ENCODE measurements at regions of chr11 and their contacts with region 1.

Region 1: DNA sequence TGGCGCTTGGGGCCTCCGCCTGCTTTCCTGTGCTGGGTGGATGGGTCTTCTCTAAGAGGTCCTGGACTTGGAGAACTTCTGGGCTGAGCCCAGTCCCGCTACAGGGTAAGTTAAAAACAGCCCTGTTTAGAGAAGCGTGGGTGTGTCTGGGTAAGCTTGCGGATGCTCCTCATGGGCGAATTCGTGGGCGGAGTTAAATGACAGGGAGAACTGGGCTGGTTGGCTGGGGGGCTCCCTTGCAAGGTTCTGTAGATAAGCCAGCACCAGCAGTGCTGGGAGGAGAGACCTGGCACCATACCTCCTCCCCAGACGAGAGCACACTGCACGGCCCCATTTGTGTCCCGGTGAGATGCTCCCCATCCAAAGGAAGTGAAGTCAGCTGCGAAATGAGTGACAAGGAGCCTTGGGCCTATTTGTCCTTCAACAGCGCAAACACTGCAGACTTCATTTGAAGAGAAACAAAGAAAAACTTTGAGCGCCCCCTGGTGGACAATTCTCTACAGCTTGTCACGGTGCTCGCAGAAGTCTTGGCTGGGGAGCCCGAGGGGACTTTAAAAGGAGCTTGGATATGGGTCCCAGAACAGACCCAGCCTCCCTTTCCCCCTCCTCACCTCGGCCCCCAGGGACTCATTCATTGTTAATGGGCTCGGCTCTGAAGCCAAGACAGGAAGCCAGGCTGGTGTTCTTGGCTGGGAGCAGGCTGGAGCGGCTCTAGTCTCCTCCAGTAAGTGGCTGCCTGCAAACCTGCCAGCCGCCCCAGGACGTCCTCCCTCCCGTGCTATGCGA is 39.5 kb downstream of the TP53I11 start:
- DNase-seq: peak; percentile 66 to 83 (median 74)
- H3K4me3 ChIP-seq: no peak overlapping the region
- H3K4me3 Mint-ChIP-seq: no peak overlapping the region
- H3K27ac ChIP-seq: no peak overlapping the region
- H3K27ac Mint-ChIP-seq: no peak overlapping the region
- H3K4me1 ChIP-seq: no peaks in the 10 kb centered on the region
- H3K4me1 Mint-ChIP-seq: peaks cover 3 to 7% (median 6%) of the 10 kb centered on the region in 3 donors
- H3K27me3 ChIP-seq: no peaks in the 10 kb centered on the region
- H3K27me3 Mint-ChIP-seq: peaks cover 0 to 5% of the 10 kb centered on the region in 2 donors

Region 2: GRCh38 chr11:44621140-44621681 is 290.0 kb before region 1 on chr11:
- CTCF ChIA-PET with region 1: interaction called, 22 read pairs
- POLR2A ChIA-PET with region 1: no interaction called
- DNase-seq: peak; percentile 44 to 69 (median 50)
- H3K4me3 ChIP-seq: no peak overlapping the region
- H3K4me3 Mint-ChIP-seq: no peak overlapping the region
- H3K27ac ChIP-seq: no peak overlapping the region
- H3K27ac Mint-ChIP-seq: no peak overlapping the region
- H3K4me1 ChIP-seq: peaks cover 6% of the 10 kb centered on the region
- H3K4me1 Mint-ChIP-seq: peaks cover 17 to 27% (median 18%) of the 10 kb centered on the region in 3 donors
- H3K27me3 ChIP-seq: no peaks in the 10 kb centered on the region
- H3K27me3 Mint-ChIP-seq: peaks cover 0 to 2% of the 10 kb centered on the region in 2 donors

Region 3: GRCh38 chr11:44775366-44775984 is 135.7 kb before region 1 on chr11:
- CTCF ChIA-PET with region 1: interaction called, 10 read pairs
- POLR2A ChIA-PET with region 1: no interaction called
- DNase-seq: peak; percentile 34 to 66 (median 40)
- H3K4me3 ChIP-seq: no peak overlapping the region
- H3K4me3 Mint-ChIP-seq: no peak overlapping the region
- H3K27ac ChIP-seq: no peak overlapping the region
- H3K27ac Mint-ChIP-seq: peak overlapping the region in 1 of 8 donors; percentile 2
- H3K4me1 ChIP-seq: no peaks in the 10 kb centered on the region
- H3K4me1 Mint-ChIP-seq: peaks cover 0 to 7% (median 7%) of the 10 kb centered on the region in 3 donors
- H3K27me3 ChIP-seq: no peaks in the 10 kb centered on the region
- H3K27me3 Mint-ChIP-seq: peaks cover 0 to 2% of the 10 kb centered on the region in 2 donors

Region 4: DNA sequence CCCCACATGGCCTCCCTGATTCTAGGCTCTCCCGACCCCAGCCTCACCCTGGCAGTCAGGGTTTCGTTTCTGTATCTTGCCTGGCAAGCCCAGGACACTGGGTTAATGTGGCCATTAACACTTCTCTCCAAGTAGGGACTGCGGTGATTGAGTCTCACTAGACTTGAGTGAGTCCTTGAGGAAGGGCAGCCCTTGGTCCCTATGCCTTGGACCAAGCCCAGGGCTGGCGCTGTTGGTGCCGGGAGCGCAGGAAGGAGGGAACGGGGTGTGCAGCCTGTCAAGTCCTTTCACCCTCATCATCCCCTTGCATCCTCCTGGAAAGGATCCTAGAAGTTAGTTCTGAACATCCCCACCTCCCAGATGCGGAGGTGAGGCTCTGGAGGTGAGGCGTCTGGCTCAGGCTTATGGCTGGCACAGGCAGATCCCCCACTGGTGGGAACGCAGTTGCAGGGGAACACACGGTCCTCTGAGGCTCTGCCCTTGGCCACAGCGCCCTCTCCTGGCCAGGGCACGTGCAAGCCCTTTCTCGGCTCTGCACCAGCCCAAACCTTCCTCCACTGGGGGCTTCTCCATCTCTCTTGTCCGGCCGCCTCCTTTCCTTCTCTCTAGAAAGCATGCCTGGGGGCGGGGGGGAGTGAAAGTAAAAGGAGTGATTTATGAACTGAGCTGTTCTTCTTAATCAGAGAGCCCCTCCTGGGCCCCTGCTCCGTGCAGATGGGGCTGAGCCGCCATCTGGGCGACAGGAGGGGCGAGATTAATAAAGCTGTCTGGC is 17.2 kb before region 1 on chr11:
- CTCF ChIA-PET with region 1: interaction called, 10 read pairs
- POLR2A ChIA-PET with region 1: no interaction called
- DNase-seq: peak; percentile 24 to 74 (median 52)
- H3K4me3 ChIP-seq: no peak overlapping the region
- H3K4me3 Mint-ChIP-seq: no peak overlapping the region
- H3K27ac ChIP-seq: no peak overlapping the region
- H3K27ac Mint-ChIP-seq: peak overlapping the region in 2 of 8 donors; percentile 12 to 47
- H3K4me1 ChIP-seq: no peaks in the 10 kb centered on the region
- H3K4me1 Mint-ChIP-seq: no peaks in the 10 kb centered on the region
- H3K27me3 ChIP-seq: no peaks in the 10 kb centered on the region
- H3K27me3 Mint-ChIP-seq: peaks cover 0 to 2% of the 10 kb centered on the region in 2 donors

Region 5: GRCh38 chr11:44927174-44927661 is 16.0 kb after region 1 on chr11:
- CTCF ChIA-PET with region 1: interaction called, 15 read pairs
- POLR2A ChIA-PET with region 1: no interaction called
- DNase-seq: peak; percentile 28 to 74 (median 49)
- H3K4me3 ChIP-seq: no peak overlapping the region
- H3K4me3 Mint-ChIP-seq: no peak overlapping the region
- H3K27ac ChIP-seq: no peak overlapping the region
- H3K27ac Mint-ChIP-seq: peak overlapping the region in 1 of 8 donors; percentile 52
- H3K4me1 ChIP-seq: no peaks in the 10 kb centered on the region
- H3K4me1 Mint-ChIP-seq: peaks cover 3 to 6% (median 5%) of the 10 kb centered on the region in 3 donors
- H3K27me3 ChIP-seq: no peaks in the 10 kb centered on the region
- H3K27me3 Mint-ChIP-seq: peaks cover 0 to 2% of the 10 kb centered on the region in 2 donors

Region 6: GRCh38 chr11:45102810-45103621 is 191.8 kb after region 1 on chr11:
- CTCF ChIA-PET with region 1: interaction called, 12 read pairs
- POLR2A ChIA-PET with region 1: no interaction called
- DNase-seq: peak; percentile 43 to 84 (median 60)
- H3K4me3 ChIP-seq: peak overlapping the region; percentile 21
- H3K4me3 Mint-ChIP-seq: peak overlapping the region; percentile 36 to 89 (median 81)
- H3K27ac ChIP-seq: no peak overlapping the region
- H3K27ac Mint-ChIP-seq: peak overlapping the region; percentile 64 to 94 (median 87)
- H3K4me1 ChIP-seq: peaks cover 18% of the 10 kb centered on the region
- H3K4me1 Mint-ChIP-seq: peaks cover 24 to 30% (median 30%) of the 10 kb centered on the region in 3 donors
- H3K27me3 ChIP-seq: no peaks in the 10 kb centered on the region
- H3K27me3 Mint-ChIP-seq: peaks cover 0 to 5% of the 10 kb centered on the region in 2 donors

Region 7: GRCh38 chr11:45233121-45233803 is 322.0 kb after region 1 on chr11:
- CTCF ChIA-PET with region 1: no interaction called
- POLR2A ChIA-PET with region 1: no interaction called
- DNase-seq: peak; percentile 14 to 65 (median 39)
- H3K4me3 ChIP-seq: no peak overlapping the region
- H3K4me3 Mint-ChIP-seq: no peak overlapping the region
- H3K27ac ChIP-seq: no peak overlapping the region
- H3K27ac Mint-ChIP-seq: no peak overlapping the region
- H3K4me1 ChIP-seq: no peaks in the 10 kb centered on the region
- H3K4me1 Mint-ChIP-seq: peaks cover 0 to 4% (median 0%) of the 10 kb centered on the region in 3 donors
- H3K27me3 ChIP-seq: no peaks in the 10 kb centered on the region
- H3K27me3 Mint-ChIP-seq: peaks cover 15 to 22% of the 10 kb centered on the region in 2 donors

Measured in CD8-positive, alpha-beta memory T cell (primary cell).